Heart right ventricle (tissue), 16 donors: ENCODE measurements at regions of chr9 and their contacts with region 1.

Region 1: DNA sequence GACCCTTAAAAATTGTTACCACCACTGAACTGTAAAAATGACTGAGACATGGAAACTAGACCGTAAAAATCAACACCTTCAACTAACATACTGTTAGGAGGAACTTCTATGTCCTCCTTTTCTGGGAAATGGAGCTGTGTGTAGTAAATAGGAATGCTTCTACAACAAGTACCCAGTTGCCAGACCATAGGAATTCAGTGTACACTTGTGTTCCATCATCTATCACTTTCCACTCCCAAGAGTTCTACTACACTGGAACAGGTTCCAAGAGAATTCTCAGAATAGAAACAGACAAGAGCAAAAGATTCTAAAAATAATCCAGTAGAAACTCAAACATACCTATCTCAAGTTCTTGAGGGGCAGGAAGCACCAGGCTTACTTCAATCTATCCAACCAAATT is 23.6 kb downstream of the UBAP2 start:
- DNase-seq: peak in 1 of 2 donors; percentile 22
- ATAC-seq: peak; percentile 69 to 96 (median 90)
- H3K4me3 ChIP-seq: no peak overlapping the region
- H3K27ac ChIP-seq: peak overlapping the region in 9 of 10 donors; percentile 33 to 69 (median 60)
- H3K4me1 ChIP-seq: peaks cover 0 to 28% (median 8%) of the 10 kb centered on the region in 9 donors
- H3K27me3 ChIP-seq: no peaks in the 10 kb centered on the region
- CTCF ChIP-seq: no peak

Region 2: DNA sequence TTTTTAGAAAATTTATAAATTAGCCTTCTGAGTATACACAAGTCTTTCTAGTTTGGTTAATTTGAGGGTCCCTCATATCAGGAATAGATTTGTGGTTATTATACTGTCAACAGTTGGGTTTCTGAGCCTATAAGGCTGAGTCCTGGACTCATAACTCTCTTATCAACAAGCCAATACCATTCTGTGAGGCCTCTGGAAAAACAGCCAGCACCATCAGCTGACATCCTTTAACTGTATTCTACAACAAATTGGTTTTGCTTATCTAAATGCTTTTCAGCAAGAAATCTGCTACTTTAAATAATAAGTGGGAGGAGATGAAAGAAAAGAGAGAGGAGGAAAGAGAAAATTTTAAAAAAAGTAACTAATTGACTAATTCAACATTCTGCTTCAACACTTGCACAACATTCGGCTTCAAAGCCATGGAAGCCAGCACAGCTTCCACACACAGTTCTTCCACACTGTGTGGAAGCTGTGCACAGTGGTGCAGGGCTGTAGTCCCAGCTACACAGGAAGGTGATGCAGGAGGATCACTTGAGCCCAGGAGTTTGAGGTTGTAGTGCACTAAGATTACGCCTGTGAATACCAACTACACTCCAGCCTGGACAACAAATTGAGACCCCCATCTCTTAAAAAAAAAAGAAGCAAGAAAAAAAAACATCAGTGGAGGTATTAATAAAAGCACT is 60.8 kb before region 1 on chr9:
- intact Hi-C with region 1: no loop called
- DNase-seq: no peak
- ATAC-seq: no peak
- H3K4me3 ChIP-seq: no peak overlapping the region
- H3K27ac ChIP-seq: no peak overlapping the region
- H3K4me1 ChIP-seq: no peaks in the 10 kb centered on the region
- H3K27me3 ChIP-seq: no peaks in the 10 kb centered on the region
- CTCF ChIP-seq: no peak

Region 3: GRCh38 chr9:35711501-35712428 is 1686.7 kb after region 1 on chr9:
- intact Hi-C with region 1: loop called in 1 of 10 experiments (anchors 5 kb)
- DNase-seq: no peak
- ATAC-seq: no peak
- H3K4me3 ChIP-seq: no peak overlapping the region
- H3K27ac ChIP-seq: no peak overlapping the region
- H3K4me1 ChIP-seq: no peaks in the 10 kb centered on the region
- H3K27me3 ChIP-seq: no peaks in the 10 kb centered on the region
- CTCF ChIP-seq: no peak